Right ventricle myocardium inferior (tissue), 1 donor: ENCODE measurements at regions of chr7 and their contacts with region 1.

Region 1: DNA sequence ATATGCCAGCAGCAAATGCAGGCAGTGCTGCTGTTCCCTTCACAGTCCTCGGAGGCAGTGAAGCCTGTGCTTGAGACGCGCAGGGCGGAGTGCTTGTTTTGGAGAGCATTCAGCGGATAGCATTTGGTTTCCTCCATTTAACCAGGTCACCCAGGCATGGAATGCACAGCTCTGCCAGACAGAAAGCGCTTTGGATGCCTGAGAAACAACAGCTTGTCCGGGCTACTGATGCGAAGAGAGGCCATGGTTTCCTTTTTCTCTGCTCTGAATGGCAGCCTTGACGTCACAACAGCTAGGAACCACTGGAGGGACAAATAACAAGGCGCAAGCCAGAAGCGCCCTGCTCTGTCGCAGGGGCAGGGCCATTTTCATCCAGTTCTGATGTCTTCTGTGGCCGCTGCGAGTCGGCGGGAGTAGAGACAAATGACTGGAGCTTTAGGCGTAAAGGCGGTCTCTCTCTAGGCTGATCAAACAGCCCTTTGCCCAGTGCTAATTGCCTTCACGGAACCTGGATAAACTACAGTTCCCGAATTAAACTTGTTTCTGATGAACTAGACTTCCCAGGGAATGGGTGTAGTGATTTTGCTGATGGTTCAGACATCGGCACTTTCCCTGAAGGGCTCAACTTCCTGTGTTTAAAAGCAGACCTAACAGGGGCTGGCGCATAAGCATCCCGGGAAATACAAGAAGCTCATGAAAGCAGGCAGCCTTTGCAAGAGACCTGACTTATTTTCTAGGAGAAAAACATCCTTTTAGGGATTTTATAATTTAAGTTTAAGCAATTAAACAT is 187.6 kb upstream of the KLF14 start:
- DNase-seq: peak; percentile 76
- ATAC-seq: peak; percentile 84

Region 2: GRCh38 chr7:130959743-130960207 is 38.2 kb after region 1 on chr7:
- intact Hi-C with region 1: loop called (anchors 5 kb)
- DNase-seq: no peak
- ATAC-seq: no peak